Transverse colon (tissue), 4 donors: ENCODE measurements at regions of chr13 and their contacts with region 1.

Region 1: GRCh38 chr13:43489233-43489632 is 297.5 kb downstream of the ENOX1 start:
- DNase-seq: peak; percentile 15
- H3K4me3 ChIP-seq: no peak overlapping the region
- H3K27ac ChIP-seq: peak overlapping the region in 1 of 4 donors; percentile 22
- H3K4me1 ChIP-seq: peaks cover 0 to 3% (median 0%) of the 10 kb centered on the region in 4 donors
- H3K27me3 ChIP-seq: no peaks in the 10 kb centered on the region
- CTCF ChIP-seq: no peak
- EP300 ChIP-seq: no peak
- POLR2A ChIP-seq: no peak

Region 2: DNA sequence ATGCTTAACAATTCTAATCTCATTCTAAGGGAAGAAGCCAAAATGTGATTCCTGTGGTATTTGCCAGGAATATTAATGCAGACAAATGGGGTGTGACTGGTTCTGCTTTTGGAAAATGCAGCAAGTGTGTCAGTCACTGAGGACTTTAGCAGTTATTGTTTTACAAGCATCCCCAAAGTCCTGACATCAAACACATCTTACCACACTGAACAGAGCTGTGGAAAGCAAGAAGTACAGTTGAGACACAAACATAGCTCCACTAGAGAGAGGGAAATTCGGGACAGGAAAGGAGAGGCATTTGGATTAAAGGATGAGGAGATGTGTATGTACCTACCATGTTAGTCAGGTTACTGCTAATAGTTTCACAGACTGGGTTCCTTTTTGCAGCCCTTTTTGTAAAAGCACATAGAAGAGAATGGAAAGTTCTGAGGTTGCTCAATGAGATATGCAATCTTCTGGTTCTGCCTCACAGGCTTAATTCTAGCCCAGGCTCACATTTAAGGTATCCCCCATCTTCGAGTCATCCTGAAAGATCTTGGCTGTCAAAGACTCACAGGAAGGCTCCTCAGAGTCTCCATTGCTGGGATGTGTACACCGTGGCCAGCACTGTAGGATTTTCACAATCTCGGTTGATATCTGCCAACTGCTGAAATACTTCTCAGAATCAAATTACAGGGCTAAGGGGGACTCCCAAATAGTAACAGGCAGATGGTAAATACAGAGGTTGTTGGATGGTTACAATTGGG is 149.3 kb before region 1 on chr13:
- in situ Hi-C with region 1: no loop called
- intact Hi-C with region 1: no loop called
- DNase-seq: no peak
- H3K4me3 ChIP-seq: no peak overlapping the region
- H3K27ac ChIP-seq: no peak overlapping the region
- H3K4me1 ChIP-seq: peaks cover 0 to 3% (median 0%) of the 10 kb centered on the region in 4 donors
- H3K27me3 ChIP-seq: no peaks in the 10 kb centered on the region
- CTCF ChIP-seq: no peak
- EP300 ChIP-seq: no peak
- POLR2A ChIP-seq: no peak

Region 3: DNA sequence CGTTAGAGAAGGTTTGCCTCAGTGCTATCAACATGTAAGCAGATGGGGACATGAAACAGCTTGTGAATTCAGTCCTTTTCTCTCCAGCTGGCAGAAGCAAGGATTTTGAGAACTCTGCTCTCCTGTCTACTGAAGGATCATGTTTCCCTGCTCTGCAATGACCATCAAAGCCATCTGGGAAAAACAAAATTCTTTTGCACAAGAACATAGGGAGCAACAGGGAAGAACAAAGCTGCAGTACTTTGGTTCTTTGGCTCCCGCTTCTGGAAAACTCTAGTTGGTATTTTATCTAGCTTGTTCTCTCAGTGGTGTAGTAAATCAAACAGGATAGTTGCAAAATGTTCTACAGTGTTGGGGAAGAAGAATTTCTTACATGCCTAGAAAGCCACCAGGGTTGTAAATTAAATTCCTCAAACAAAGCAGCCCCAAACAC is 27.2 kb after region 1 on chr13:
- in situ Hi-C with region 1: no loop called
- intact Hi-C with region 1: loop called (anchors 2 kb)
- DNase-seq: no peak
- H3K4me3 ChIP-seq: no peak overlapping the region
- H3K27ac ChIP-seq: peak overlapping the region; percentile 63 to 84 (median 70)
- H3K4me1 ChIP-seq: peaks cover 0 to 7% (median 3%) of the 10 kb centered on the region in 4 donors
- H3K27me3 ChIP-seq: no peaks in the 10 kb centered on the region
- CTCF ChIP-seq: no peak
- EP300 ChIP-seq: no peak
- POLR2A ChIP-seq: no peak

Region 4: DNA sequence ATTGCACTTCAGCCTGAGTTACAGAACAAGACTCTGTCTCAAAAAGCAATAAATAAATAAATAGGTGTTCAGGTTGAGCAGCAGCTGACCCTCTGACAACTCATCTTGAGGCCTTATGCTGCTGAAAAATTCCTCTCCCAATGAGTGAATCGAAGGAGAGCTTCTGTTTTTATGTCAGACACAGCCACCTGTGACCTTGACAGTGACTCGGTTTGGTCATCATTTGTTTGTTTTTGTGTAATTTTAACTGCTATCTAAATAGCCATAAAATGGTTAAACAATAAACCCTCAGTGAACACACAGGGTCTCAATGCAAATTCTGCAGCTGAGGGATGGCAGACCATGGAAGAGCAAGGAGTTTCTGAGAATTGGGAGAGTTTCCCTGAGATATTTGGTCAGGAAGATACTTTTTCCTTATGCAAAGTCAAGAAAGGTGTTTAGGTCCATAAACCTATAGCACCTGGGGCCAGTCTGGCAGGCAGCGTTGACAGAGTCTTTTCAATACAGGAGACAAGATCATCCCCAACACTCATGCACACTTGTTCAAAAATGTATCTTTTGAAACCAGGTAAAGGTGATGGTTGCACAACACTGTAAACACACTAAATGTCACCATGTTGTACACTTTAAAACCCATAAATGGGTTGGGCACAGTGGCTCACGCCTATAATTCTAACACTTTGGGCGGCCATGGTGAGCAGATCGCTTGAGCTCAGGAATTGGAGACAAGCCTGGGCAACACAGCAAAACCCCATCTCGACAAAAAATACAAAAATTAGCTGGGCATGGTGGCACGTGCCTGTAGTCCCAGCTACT is 1945.5 kb after region 1 on chr13:
- in situ Hi-C with region 1: no loop called
- intact Hi-C with region 1: no loop called
- DNase-seq: peak; percentile 35
- H3K4me3 ChIP-seq: no peak overlapping the region
- H3K27ac ChIP-seq: peak overlapping the region; percentile 67 to 72 (median 70)
- H3K4me1 ChIP-seq: peaks cover 0 to 14% (median 1%) of the 10 kb centered on the region in 4 donors
- H3K27me3 ChIP-seq: no peaks in the 10 kb centered on the region
- CTCF ChIP-seq: no peak
- EP300 ChIP-seq: no peak
- POLR2A ChIP-seq: no peak